Prostate gland (tissue), 2 donors: ENCODE measurements at regions of chr11 and their contacts with region 1.

Region 1: GRCh38 chr11:93234602-93235207 is 36.9 kb upstream of the SLC36A4 start:
- DNase-seq: peak; percentile 74
- H3K4me3 ChIP-seq: no peak overlapping the region
- H3K27ac ChIP-seq: no peak overlapping the region
- H3K4me1 ChIP-seq: no peaks in the 10 kb centered on the region
- H3K27me3 ChIP-seq: no peaks in the 10 kb centered on the region
- CTCF ChIP-seq: peak; percentile 62 to 92 (median 86)
- POLR2A ChIP-seq: no peak

Region 2: GRCh38 chr11:92941676-92942571 is 292.8 kb before region 1 on chr11:
- intact Hi-C with region 1: loop called (anchors 10 kb)
- DNase-seq: no peak
- H3K4me3 ChIP-seq: no peak overlapping the region
- H3K27ac ChIP-seq: no peak overlapping the region
- H3K4me1 ChIP-seq: no peaks in the 10 kb centered on the region
- H3K27me3 ChIP-seq: no peaks in the 10 kb centered on the region
- CTCF ChIP-seq: peak in 3 of 4 experiments; percentile 34 to 43 (median 34)
- POLR2A ChIP-seq: no peak

Region 3: GRCh38 chr11:93543292-93543977 is 308.7 kb after region 1 on chr11 and contains the start of gene SMCO4:
- intact Hi-C with region 1: loop called (anchors 2 kb)
- DNase-seq: peak; percentile 72
- H3K4me3 ChIP-seq: peak within 1 kb of the TSS; percentile 58 to 78
- H3K27ac ChIP-seq: peak within 1 kb of the TSS; percentile 89 to 94
- H3K4me1 ChIP-seq: peaks cover 7% of the 10 kb centered on the region
- H3K27me3 ChIP-seq: no peaks in the 10 kb centered on the region
- CTCF ChIP-seq: peak; percentile 69 to 89 (median 79)
- POLR2A ChIP-seq: peak; percentile 25
- total RNA-seq, gene SMCO4: 63.8 to 140 TPM

Region 4: DNA sequence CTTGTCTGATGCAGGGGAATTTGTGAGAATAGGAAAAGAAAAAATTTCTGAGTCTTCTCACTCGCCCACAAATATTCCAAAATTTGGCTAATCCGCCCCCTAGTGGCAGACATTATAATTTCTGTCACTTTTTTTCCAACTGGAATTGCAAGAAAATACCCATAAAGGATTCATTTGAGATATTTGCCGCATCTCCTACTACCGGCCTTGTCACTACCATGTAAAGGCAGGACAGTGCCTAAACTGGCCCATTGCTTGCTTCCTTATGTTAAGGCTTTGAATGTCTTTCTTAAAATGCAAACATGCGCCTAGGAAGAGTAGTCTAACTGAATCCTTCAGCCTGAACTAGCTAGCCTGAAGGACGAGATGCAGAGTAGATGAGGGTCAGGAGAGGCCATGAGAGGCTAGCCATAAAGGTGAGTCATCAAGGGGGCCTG is 417.5 kb after region 1 on chr11:
- intact Hi-C with region 1: loop called (anchors 2 kb)
- DNase-seq: peak; percentile 40
- H3K4me3 ChIP-seq: no peak overlapping the region
- H3K27ac ChIP-seq: no peak overlapping the region
- H3K4me1 ChIP-seq: no peaks in the 10 kb centered on the region
- H3K27me3 ChIP-seq: no peaks in the 10 kb centered on the region
- CTCF ChIP-seq: peak; percentile 64 to 99 (median 70)
- POLR2A ChIP-seq: no peak